Tibial artery (tissue), 4 donors: ENCODE measurements at regions of chr7 and their contacts with region 1.

Region 1: DNA sequence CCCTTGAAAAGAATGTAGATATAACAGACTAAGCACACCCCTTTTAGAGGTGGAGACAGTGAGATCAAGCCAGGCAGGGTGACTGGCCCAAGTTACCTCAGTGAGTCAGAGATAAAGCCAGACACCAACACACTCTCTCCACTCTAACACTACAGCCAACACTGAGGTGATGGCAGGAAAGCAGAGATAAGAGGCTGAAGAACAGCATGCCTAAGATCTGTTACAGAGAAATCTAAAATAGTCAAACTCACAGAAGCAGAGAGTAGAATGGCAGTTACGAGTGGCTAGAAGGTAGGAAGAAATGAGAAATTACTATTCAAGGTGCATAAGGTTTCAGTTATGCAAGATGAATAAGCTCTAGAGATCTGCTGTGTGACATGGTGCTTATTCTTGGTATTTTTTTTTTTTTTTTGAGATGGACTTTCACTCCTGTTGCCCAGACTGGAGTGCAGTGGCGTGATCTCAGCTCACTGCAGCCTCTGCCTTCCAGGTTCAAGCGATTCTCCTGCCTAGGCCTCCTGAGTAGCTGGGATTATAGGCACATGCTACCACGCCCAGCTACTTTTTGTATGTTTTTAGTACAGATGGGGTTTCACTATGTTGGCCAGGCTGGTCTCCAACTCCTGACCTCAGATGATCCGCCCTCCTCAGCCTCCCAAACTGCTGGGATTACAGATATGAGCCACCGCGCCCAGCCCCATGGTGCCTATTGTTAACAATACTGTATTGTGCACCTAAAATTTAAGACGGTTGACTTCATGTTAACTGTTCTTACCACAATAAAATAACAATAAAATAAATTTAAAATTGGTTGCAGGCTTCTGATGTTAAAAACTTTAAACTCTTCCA is 28.7 kb downstream of the ICA1 start:
- DNase-seq: no peak
- H3K4me3 ChIP-seq: no peak overlapping the region
- H3K27ac ChIP-seq: no peak overlapping the region
- H3K4me1 ChIP-seq: no peaks in the 10 kb centered on the region
- H3K27me3 ChIP-seq: no peaks in the 10 kb centered on the region
- CTCF ChIP-seq: no peak

Region 2: DNA sequence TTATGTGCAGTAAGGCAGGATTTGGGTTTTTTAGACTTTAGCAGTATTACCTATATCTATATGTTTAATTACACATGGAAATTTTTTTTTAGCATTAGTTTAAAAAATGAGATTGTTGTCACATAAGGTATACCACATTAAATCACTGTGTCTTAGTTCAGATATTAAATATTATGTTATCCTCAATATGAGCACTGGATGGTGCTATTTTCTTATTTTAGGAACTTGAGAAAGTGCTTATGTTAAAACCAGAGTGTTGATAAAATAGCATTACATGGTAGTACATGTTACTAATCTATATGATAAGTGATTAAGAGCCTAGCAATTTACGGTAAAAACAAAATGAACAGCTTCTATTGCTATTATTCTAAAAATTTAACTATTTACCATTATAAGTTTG is 637.8 kb before region 1 on chr7:
- intact Hi-C with region 1: loop called (anchors 10 kb)
- DNase-seq: no peak
- H3K4me3 ChIP-seq: no peak overlapping the region
- H3K27ac ChIP-seq: no peak overlapping the region
- H3K4me1 ChIP-seq: no peaks in the 10 kb centered on the region
- H3K27me3 ChIP-seq: no peaks in the 10 kb centered on the region
- CTCF ChIP-seq: peak; percentile 26 to 41

Region 3: DNA sequence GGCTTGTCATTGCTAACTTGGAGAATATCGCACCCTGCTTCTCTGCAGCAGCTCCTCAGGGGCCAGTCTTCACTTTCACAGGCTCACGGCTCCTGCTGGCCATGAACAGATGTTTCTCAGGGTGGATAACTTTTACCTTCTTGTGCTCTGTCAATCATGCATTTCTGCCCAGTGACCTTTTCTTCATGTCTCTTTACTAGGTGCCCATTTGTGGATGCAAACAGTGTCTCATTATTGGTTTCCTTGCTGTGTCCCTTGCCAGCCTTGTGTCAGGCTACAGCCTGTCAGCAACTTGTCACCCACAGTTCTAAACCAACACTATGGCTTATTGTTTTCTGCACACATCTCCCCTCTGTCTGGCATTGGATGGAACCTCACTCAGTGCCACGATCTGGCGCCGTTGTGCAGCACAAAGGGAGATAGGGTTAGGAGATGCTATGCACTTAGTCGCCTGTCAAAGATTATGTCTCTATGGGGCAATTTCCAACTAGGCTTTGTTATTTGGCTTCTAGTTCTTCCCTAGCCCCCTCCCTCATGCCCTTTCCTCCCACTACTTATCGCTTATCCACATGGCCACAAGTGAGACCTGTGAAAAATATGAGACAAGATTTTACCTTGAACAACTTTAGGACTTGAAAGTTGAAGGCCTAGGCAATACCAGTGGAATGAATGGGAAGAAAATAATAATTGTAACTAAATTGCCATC is 154.5 kb after region 1 on chr7:
- intact Hi-C with region 1: no loop called
- DNase-seq: no peak
- H3K4me3 ChIP-seq: no peak overlapping the region
- H3K27ac ChIP-seq: no peak overlapping the region
- H3K4me1 ChIP-seq: no peaks in the 10 kb centered on the region
- H3K27me3 ChIP-seq: no peaks in the 10 kb centered on the region
- CTCF ChIP-seq: no peak